ENCODE measurements at regions of chr14 and their contacts with region 1.

Region 1: DNA sequence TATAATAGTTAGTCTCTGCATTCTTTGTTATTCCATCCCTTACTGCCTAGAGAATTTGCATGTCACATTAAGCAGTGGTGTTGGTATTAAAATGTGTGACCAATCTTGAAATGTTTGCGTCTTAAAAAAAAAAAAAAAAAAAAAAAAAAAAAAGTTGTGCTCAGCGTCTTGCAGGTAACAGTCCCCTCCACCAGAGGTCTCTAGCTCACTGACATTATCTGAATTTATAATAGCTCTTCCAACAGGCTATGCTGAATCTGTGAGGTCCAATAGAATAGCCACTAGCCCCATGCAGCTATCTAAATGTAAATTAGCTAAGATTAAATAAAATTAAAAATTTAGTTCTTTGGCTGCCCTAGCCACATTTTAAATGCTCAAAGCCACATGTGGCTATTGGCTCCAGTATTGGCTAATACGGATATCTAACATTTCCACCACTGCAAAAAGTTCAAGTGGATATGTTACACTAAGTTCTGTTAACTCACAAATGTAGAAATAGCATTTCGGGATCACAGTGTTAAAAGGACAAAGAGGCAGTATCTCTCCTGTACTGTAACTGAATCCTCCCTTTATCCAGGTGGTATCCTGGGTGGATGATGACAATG is 28.7 kb downstream of the NKX2-8 start:
- DNase-seq: no peak
- H3K4me3 ChIP-seq: no peak overlapping the region
- H3K27ac ChIP-seq: no peak overlapping the region
- H3K4me1 ChIP-seq: no peaks in the 10 kb centered on the region
- H3K27me3 ChIP-seq: peaks cover 0 to 5% (median 0%) of the 10 kb centered on the region in 7 donors
- CTCF ChIP-seq: peak in 6 of 11 experiments; percentile 18 to 56 (median 40)
- POLR2A ChIP-seq: no peak

Region 2: DNA sequence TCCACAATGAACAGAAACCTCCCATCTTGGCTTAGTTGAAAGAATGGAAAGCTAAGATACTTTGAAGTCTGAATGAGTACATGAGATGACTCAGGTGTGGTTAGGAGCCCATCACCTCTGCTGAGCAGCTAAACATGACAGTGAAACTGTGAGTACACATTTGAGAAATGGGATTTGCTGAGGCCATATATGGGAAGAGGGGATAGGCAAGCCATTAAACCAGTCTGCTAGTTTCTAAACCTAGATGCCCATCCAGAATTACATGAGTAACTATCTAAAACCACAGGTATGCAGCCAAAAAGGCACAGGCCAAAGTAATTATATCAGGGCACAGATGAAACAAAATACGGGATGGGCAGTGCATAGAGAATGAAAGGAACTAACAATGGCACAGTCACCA is 75.0 kb before region 1 on chr14:
- intact Hi-C with region 1: no loop called
- DNase-seq: no peak
- H3K4me3 ChIP-seq: no peak overlapping the region
- H3K27ac ChIP-seq: no peak overlapping the region
- H3K4me1 ChIP-seq: no peaks in the 10 kb centered on the region
- H3K27me3 ChIP-seq: peaks cover 0 to 10% (median 0%) of the 10 kb centered on the region in 7 donors
- CTCF ChIP-seq: no peak
- POLR2A ChIP-seq: no peak

Region 3: DNA sequence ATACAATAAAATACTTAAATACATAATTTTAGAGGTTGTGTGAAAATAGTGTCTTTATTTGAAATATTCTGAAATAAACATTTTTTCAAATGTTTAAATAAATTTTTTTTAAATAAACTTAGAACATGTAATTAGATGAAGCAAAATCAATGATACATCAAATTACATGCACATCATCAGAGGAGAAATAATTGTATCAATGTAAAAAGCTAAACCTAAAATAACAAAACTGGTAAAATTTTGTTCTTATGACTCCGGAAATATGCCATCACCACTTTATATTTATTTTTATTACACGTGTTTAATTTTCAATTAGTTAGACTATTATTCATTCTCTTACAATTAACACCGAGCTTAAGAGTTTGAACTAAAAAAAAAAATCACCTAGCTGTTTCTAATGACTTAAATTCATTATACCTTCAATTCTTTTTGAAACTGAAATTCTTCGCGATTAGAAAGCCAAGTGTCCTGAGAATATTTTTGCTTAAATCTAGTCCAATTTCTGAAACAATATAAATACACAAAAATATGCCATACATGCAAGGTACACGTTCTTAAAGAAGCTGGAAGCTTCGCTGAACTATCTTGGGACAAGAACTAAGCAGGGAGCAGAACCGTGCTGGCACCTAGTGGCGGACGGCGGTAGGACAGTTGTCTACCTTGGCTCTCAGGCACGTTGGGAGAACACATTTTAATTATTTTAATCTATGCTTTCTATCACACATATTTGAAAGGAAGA is 388.2 kb after region 1 on chr14:
- intact Hi-C with region 1: loop called (anchors 10 kb)
- DNase-seq: peak; percentile 77
- H3K4me3 ChIP-seq: no peak overlapping the region
- H3K27ac ChIP-seq: no peak overlapping the region
- H3K4me1 ChIP-seq: no peaks in the 10 kb centered on the region
- H3K27me3 ChIP-seq: peaks cover 0 to 5% (median 0%) of the 10 kb centered on the region in 7 donors
- CTCF ChIP-seq: peak; percentile 10 to 82 (median 67)
- POLR2A ChIP-seq: no peak

Measured in spleen (tissue), 13 donors.